ENCODE measurements at regions of chr1 and their contacts with region 1.

Region 1: DNA sequence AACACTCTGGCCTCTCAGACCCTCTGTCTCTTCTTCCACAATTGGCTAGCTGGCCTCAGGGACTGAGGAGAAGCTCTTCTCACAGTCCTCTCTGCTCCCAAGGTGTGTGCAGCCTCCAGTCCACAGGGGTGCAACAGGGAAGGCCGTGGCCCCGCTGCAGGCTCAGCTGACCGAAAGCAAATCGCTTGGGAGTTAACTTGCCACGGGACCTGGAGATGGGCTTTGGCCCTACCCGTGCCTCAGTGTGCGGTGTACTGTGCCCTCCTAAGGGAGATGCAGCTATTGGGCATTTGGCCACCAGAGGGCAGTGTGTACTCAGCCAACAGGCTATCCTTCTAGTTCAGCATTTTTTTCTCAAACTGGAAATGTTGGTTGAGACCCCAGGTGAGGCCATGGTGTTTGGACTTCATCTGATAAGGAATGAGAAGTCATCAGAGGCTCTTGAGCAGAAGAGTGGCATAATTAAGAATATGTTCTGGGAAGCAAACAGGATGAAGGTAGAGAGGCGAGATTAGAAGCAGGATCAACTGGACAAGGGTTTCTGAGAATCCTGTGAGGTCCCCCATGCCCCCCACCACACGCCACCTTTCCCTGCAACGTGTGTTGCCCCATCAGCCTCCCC is 42.5 kb upstream of the TMEM125 start:
- DNase-seq: peak; percentile 82 to 93 (median 88)
- ATAC-seq: peak; percentile 64 to 81
- H3K4me3 ChIP-seq: no peak overlapping the region
- H3K27ac ChIP-seq: no peak overlapping the region
- H3K4me1 ChIP-seq: no peaks in the 10 kb centered on the region
- H3K27me3 ChIP-seq: no peaks in the 10 kb centered on the region

Region 2: GRCh38 chr1:43348809-43349583 is 121.7 kb after region 1 on chr1:
- intact Hi-C with region 1: no loop called
- DNase-seq: peak; percentile 82 to 94 (median 93)
- ATAC-seq: peak; percentile 88 to 92
- H3K4me3 ChIP-seq: peak overlapping the region; percentile 45
- H3K27ac ChIP-seq: peak overlapping the region; percentile 91
- H3K4me1 ChIP-seq: peaks cover 1% of the 10 kb centered on the region
- H3K27me3 ChIP-seq: no peaks in the 10 kb centered on the region

Region 3: DNA sequence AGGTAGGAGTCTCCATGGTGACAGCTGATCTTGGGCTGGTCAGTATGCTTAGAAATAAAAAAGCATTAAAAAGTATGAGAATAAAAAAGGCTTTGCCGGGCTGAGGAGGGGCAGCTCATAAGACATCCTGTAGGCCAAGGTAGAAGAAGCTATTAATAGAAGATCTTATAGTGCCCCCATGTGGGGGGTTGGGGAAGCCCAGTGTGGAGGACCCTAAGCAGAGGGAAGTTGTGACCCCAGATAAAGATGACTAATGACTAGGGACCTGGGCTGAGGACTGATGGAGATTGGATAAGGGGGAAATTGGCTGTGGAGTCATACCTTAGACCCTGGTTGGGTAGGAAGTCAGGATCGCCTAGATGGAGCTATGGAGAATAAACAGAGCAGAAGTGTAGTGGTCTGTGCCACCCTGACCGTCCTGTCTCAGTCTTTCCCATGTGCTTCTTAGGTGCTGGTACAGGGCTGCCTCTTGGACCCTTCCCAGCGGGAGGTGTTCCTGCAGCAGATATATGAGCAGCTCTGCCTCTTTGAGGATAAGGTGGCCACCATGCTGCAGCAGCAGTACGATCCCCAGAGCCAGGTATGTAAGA is 187.5 kb after region 1 on chr1:
- intact Hi-C with region 1: loop called (anchors 2 to 10 kb)
- DNase-seq: peak in 2 of 3 donors; percentile 49 to 56
- ATAC-seq: peak; percentile 73 to 83
- H3K4me3 ChIP-seq: no peak overlapping the region
- H3K27ac ChIP-seq: no peak overlapping the region
- H3K4me1 ChIP-seq: no peaks in the 10 kb centered on the region
- H3K27me3 ChIP-seq: no peaks in the 10 kb centered on the region

Measured in right cardiac atrium (tissue), 5 donors.